Kidney (tissue), 22 donors: ENCODE measurements at regions of chr2 and their contacts with region 1.

Region 1: GRCh38 chr2:189086710-189087109 is 92.9 kb downstream of the COL5A2 start:
- DNase-seq: peak in 2 of 5 donors; percentile 46 to 66
- H3K4me3 ChIP-seq: no peak overlapping the region
- H3K27ac ChIP-seq: no peak overlapping the region
- H3K4me1 ChIP-seq: peaks cover 0 to 2% (median 0%) of the 10 kb centered on the region in 3 donors
- H3K27me3 ChIP-seq: no peaks in the 10 kb centered on the region
- CTCF ChIP-seq: no peak

Region 2: GRCh38 chr2:189236066-189236465 is 149.4 kb after region 1 on chr2:
- intact Hi-C with region 1: no loop called
- DNase-seq: no peak
- H3K4me3 ChIP-seq: no peak overlapping the region
- H3K27ac ChIP-seq: no peak overlapping the region
- H3K4me1 ChIP-seq: no peaks in the 10 kb centered on the region
- H3K27me3 ChIP-seq: no peaks in the 10 kb centered on the region
- CTCF ChIP-seq: no peak

Region 3: DNA sequence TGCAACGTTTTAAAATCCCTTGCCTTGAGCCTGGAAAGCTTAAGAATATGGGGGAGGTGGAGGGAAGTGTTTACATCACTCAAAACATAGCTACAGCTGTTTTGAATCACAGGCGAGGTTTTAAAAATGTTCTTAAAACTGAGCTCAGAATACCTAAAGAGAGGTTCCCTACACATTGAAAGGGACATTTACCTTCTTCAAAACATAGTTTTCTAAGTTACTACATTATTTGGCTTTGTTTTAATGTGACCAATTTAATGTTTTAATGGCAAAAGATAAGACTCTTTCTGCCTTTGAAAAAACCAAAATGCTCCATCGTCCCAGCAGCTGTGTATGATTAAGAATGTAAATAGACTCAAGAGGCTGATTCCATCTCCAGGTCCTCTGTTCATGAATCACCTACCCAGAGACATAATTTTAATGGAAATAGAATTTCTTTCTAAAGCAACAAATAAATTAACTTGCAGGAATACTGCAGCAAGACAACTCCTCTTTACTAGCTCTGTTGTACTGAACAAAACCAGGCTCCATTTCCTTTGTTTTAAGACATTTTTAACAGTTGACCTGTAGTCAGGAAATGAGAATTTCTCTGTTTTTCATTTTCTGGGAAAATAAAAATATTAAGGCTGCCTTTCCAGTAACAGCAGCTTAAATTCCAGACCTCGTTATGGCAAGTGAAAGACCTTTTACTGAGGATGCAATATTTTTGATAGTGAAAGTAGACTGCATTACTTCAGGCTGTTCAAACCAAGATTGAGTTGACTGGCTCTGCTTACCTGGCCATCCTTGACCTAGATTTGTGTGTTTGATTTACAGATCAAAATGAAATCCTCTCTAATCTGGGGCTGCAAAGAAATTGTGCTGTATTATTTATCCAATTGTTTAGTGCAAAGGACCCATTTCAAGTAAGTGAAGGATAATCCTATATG is 320.8 kb after region 1 on chr2:
- intact Hi-C with region 1: loop called (anchors 10 kb)
- DNase-seq: peak in 2 of 5 donors; percentile 53 to 77
- H3K4me3 ChIP-seq: no peak overlapping the region
- H3K27ac ChIP-seq: no peak overlapping the region
- H3K4me1 ChIP-seq: no peaks in the 10 kb centered on the region
- H3K27me3 ChIP-seq: no peaks in the 10 kb centered on the region
- CTCF ChIP-seq: no peak